H1 (cell line): ENCODE measurements at regions of chr12 and their contacts with region 1.

Region 1: GRCh38 chr12:14454098-14454907 is 88.8 kb downstream of the ATF7IP start:
- DNase-seq: peak in 1 of 2 experiments; percentile 15
- H3K4me3 ChIP-seq: no peak overlapping the region
- H3K27ac ChIP-seq: no peak overlapping the region
- H3K4me1 ChIP-seq: peaks cover 0 to 5% (median 2%) of the 10 kb centered on the region in 4 experiments; a peak in 3 of 7 replicates
- H3K27me3 ChIP-seq: no peaks in the 10 kb centered on the region
- CTCF ChIP-seq: peak; percentile 28 to 99 (median 97)
- EP300 ChIP-seq: no peak
- POLR2A ChIP-seq: no peak
- RAD21 ChIP-seq: peak; percentile 93

Region 2: DNA sequence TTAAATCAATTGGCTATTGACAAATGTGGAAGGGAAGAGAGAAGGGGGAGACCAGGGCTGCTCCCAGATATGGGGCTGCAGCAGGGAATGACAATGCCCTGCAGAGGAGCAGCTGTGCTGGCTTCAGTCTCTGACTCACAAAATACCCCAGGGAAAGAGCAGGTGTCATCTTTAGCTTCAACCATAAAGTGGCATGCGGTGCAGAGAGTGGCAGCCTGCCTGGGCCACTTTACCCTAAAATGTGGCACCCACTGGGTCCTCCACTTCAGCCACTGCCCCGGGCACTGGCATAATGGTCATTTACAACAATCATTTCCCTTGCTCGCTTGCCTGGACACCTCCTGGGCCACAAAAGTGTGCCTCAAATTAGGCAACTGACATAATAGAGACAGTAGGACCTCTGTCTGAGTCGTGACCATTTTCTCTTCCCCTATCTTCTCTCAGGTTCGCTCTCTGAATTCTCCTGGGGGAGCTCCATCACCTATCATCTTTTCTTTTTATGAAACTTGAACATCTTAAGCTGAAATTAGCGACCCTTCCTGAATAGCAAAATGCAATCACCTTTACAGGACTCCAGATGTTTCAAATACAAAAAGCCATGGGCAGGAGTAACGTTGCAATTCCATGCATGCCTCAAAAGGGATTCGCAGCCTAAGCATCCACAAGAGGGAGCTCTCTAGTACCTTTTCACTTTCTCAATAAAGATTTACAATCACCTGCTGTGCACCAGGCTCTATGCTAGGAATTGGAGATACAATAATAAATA is 268.7 kb before region 1 on chr12:
- CTCF ChIA-PET with region 1: interaction called, 14 read pairs
- POLR2A ChIA-PET with region 1: no interaction called
- DNase-seq: peak in 1 of 2 experiments; percentile 60
- H3K4me3 ChIP-seq: no peak overlapping the region
- H3K27ac ChIP-seq: no peak overlapping the region
- H3K4me1 ChIP-seq: no peaks in the 10 kb centered on the region; a peak in 1 of 7 replicates
- H3K27me3 ChIP-seq: no peaks in the 10 kb centered on the region
- CTCF ChIP-seq: peak in 2 of 3 experiments; percentile 61 to 78; a peak in 3 of 4 replicates
- EP300 ChIP-seq: no peak
- POLR2A ChIP-seq: no peak
- RAD21 ChIP-seq: peak; percentile 74 to 80

Region 3: DNA sequence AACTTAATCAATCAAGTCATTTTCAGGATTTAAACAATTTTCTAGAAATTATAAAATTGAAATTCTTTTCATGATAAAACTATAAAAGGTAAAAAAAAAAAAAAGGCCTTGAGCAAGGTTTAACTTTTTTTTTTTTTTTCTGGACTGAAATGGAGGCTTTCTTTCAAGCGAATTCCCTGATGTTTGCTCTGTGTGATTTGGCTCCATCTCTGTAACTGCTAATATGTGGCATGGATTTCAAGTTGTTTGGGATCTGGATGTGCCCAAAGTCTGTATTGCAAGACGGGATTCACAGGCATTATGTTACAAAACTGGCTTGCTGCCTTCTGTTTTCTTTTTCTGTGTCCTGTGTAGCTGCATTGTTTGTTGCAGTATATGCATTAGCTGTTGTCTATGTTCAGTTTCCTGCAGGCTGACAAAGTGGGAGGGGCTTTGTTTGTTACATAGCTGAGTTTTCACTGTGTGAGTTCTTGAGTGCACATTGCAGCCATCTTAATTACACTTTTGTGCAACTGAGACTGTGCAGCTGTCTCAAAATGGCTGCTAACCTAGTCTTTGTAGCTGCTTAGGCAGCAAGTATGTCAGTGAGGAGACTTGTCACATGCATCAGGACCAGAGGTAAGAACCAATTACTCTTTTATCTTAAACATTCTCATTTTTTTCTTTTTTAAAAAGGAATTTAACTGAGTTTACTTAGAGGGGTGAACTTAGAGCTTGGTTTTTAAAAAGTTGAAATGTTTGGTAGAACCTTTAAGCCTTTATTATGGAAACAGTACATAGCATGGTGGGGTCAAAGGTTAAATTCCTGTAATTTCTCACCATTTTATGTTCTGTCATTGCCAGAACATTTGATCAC is 69.3 kb before region 1 on chr12:
- CTCF ChIA-PET with region 1: interaction called, 18 read pairs
- POLR2A ChIA-PET with region 1: no interaction called
- DNase-seq: peak; percentile 33 to 63
- H3K4me3 ChIP-seq: peak overlapping the region in 3 of 4 experiments; percentile 3 to 49 (median 11); a peak in 4 of 8 replicates
- H3K27ac ChIP-seq: peak overlapping the region; percentile 68; the same call in 1 of the 2 replicates
- H3K4me1 ChIP-seq: peaks cover 0 to 34% (median 7%) of the 10 kb centered on the region in 4 experiments; a peak in 5 of 7 replicates
- H3K27me3 ChIP-seq: no peaks in the 10 kb centered on the region
- CTCF ChIP-seq: no peak
- EP300 ChIP-seq: no peak
- POLR2A ChIP-seq: no peak; a peak in 1 of 3 replicates
- RAD21 ChIP-seq: 0 out of 4 replicates have a peak, but pooled peaks of 1 of the 2 experiments have one; percentile 13

Region 4: DNA sequence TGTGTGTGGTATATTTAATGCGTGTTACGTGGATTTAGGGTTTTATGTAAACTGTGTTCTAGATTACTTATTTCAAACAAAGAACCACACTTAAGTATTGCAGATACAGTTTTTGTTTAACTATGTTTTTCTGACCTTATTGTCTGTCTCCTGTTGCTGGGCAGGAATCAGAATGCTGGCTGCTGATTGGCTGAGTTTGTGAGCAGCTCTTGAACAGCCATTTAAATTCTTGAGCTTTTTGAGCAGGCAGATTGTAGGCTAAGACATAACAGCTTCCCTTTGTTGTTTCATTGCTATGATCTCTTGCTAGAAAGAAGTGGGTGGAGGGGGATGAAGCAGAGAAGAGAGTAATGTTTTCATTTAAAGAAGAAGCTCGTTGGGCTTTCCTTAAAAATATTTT is 36.6 kb before region 1 on chr12:
- CTCF ChIA-PET with region 1: interaction called, 18 read pairs
- POLR2A ChIA-PET with region 1: no interaction called
- DNase-seq: peak; percentile 64 to 72
- H3K4me3 ChIP-seq: peak overlapping the region in 1 of 4 experiments; percentile 36; a peak in 1 of 8 replicates
- H3K27ac ChIP-seq: peak overlapping the region; percentile 32; the same call in 1 of the 2 replicates
- H3K4me1 ChIP-seq: peaks cover 0 to 12% (median 4%) of the 10 kb centered on the region in 4 experiments; a peak in 2 of 7 replicates
- H3K27me3 ChIP-seq: no peaks in the 10 kb centered on the region
- CTCF ChIP-seq: no peak
- EP300 ChIP-seq: no peak
- POLR2A ChIP-seq: no peak
- RAD21 ChIP-seq: no peak

Region 5: GRCh38 chr12:14473707-14474287 is 19.5 kb after region 1 on chr12:
- CTCF ChIA-PET with region 1: interaction called, 11 read pairs
- POLR2A ChIA-PET with region 1: no interaction called
- DNase-seq: no peak
- H3K4me3 ChIP-seq: no peak overlapping the region
- H3K27ac ChIP-seq: no peak overlapping the region
- H3K4me1 ChIP-seq: no peaks in the 10 kb centered on the region
- H3K27me3 ChIP-seq: no peaks in the 10 kb centered on the region
- CTCF ChIP-seq: no peak
- EP300 ChIP-seq: no peak
- POLR2A ChIP-seq: no peak
- RAD21 ChIP-seq: no peak